ENCODE measurements at regions of chr13 and their contacts with region 1.

Region 1: DNA sequence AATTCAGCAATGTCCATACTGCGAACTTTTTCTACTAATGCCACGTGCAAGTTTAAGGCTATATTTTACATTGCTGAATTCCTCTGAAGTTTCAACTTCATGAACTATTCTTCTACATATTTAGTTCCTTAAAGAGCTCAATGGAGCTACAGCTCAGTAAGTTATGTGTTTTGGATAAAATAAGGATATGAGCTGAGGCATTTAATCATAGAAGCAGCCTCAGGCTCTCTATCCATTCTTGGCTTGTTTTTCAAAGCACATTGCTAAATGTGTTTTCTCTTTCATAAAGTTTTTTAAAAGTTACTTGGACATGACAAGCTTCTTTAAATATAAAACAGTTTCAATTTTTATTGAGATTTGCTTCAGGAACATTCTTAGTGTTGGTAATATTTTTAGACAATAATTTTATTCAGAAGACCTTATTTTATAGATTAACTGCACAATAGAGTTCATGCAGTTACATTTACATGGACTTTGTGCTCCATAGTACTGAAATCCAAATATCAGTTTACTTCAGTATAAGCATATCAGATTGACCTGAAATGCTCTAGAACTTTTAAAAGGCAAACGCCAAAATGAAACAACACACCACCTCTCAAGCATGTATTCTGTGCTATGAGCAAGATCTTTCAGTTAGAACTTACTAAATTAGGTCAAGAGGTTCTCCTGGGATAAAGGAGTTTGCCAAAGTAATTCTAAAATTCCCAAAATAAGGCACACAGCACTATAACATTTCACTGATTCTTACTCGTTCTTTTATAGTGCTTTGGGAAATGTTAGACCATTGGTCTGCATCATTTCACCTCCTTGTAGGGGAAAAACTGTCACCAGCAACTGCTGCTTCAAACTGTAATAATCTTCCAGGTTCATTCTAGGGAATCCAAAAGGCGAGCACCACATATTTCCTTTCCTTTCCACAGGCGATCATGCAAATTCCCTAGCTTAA is 275.5 kb downstream of the ENOX1 start:
- DNase-seq: no peak
- H3K4me3 ChIP-seq: no peak overlapping the region
- H3K27ac ChIP-seq: peak overlapping the region in 1 of 2 donors; percentile 41
- H3K4me1 ChIP-seq: peaks cover 0 to 64% (median 17%) of the 10 kb centered on the region in 4 donors
- H3K27me3 ChIP-seq: no peaks in the 10 kb centered on the region
- CTCF ChIP-seq: no peak

Region 2: DNA sequence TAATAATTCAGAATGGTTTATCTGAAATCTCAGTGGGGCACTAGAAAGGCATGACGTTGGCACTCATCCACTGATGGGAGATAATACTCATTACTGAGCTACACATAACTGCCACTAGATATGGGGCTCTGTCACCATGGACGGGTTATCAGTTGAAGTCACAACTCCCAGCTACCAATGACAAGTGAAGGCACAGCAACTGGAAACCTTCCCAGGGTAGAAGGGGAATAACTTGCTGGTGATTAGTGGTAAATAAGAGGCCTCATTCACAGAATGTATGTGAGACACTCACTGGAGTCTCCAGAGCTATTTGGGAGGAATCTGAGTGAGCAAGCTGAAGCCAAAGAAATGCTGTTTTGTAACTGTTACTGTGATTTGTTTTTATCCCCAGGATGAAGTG is 25.9 kb after region 1 on chr13:
- intact Hi-C with region 1: loop called (anchors 2 kb)
- DNase-seq: no peak
- H3K4me3 ChIP-seq: no peak overlapping the region
- H3K27ac ChIP-seq: no peak overlapping the region
- H3K4me1 ChIP-seq: no peaks in the 10 kb centered on the region
- H3K27me3 ChIP-seq: no peaks in the 10 kb centered on the region
- CTCF ChIP-seq: no peak

Region 3: DNA sequence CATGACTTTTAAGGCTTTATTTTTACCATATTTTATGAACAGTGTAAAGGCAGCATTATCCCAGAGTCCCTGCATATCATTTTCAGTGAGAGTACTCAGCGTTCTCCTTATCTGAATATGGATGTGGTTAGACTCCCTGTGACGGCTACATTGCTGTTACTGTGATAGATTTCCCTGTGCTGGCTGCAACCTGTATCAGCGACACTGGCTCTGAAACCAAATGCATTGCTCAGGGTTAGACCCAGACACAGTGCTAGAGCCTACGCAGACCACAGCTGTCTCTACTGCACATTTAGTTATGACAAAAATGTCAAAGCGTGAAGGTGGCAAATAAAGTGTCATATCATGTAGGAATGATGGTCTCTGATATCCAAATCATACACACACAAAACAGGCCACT is 137.5 kb after region 1 on chr13:
- intact Hi-C with region 1: no loop called
- DNase-seq: no peak
- H3K4me3 ChIP-seq: no peak overlapping the region
- H3K27ac ChIP-seq: no peak overlapping the region
- H3K4me1 ChIP-seq: no peaks in the 10 kb centered on the region
- H3K27me3 ChIP-seq: no peaks in the 10 kb centered on the region
- CTCF ChIP-seq: no peak